ENCODE measurements at regions of chr2 and their contacts with region 1.

Region 1: DNA sequence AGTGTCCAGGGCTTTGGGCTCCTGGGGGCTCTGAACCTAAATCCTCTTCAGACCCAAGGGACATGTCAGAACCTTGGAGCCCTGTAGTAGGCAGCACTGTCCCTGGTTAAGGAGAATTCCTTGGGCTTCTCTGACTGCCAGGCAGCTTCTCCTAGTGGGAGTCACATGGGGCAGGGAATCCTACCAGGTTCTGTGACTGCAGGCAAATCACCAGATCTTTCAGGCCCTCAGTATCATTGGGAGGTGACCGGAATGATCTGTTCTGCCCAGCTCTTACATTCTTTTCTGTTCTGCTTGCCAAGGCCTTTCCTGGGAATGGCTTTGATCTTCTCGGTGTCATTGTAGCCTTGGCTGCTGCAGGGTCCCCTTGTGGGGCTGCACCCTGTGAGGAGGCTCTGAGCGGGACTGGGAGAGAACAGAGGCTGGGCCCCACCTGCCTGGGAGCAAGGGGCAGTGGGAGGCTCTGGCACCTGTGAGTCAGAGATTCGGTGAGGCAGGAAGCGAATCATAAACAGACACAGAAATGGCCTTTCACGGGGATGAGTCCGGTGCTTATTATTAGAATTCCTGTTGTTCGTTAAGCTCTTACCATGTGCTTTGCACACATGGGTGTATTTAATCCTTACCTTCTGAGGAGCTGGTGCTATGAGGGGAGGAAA is 14.1 kb downstream of the CEP68 start:
- DNase-seq: no peak
- H3K4me3 ChIP-seq: no peak overlapping the region
- H3K27ac ChIP-seq: peak overlapping the region; percentile 44 to 69 (median 56)
- H3K4me1 ChIP-seq: peaks cover 0 to 75% (median 63%) of the 10 kb centered on the region in 4 donors
- H3K27me3 ChIP-seq: no peaks in the 10 kb centered on the region
- CTCF ChIP-seq: peak in 2 of 4 experiments; percentile 23 to 33
- EP300 ChIP-seq: no peak
- POLR2A ChIP-seq: no peak

Region 2: DNA sequence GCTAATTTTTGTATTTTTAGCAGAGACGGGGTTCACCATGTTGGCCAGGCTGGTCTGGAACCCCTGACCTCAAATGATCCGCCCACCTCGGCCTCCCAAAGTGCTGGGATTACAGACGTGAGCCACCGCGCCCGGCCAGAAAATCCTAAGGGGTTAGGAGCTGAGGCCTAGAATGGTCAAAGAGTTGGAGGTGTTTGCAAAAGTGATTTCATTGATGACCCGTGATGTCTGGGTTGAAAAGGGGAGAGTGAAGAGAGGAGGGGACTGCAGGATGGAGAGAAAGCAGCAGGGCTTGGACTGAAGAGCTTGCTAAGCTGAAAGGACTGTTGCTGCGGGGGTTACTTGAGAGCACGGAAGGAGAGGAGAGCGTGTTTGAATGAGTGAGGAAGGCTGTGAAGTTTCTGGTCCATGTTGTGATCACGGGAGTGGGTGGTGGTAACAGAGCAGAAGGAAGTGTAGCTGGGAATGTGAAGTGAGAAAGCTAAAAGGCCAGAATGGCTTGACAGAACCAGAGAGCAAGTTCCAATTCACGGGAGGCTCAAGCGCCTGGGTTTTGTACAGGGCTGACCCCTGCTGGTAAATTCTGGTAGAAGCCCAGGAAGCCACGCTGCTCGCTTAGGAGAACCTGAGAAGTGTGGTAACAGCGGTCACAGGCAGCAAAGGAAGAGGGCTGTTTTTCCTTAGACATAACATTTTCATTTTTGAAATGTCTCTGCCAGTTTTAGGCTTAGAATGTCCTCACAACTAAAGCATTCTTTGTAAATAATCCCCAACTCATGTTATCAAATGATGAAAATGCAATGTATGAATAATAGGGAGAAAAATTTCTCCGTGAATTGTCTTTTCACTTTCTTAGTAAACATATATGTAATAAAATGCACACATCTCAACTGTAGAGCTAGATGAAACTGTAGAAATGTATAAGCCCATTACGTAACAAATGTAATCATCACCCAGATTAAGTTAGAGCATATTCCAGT is 116.9 kb after region 1 on chr2:
- intact Hi-C with region 1: loop called (anchors 1 kb)
- DNase-seq: peak; percentile 89
- H3K4me3 ChIP-seq: no peak overlapping the region
- H3K27ac ChIP-seq: no peak overlapping the region
- H3K4me1 ChIP-seq: peaks cover 0 to 7% (median 3%) of the 10 kb centered on the region in 4 donors
- H3K27me3 ChIP-seq: no peaks in the 10 kb centered on the region
- CTCF ChIP-seq: peak; percentile 52 to 84 (median 72)
- EP300 ChIP-seq: no peak
- POLR2A ChIP-seq: no peak

Region 3: GRCh38 chr2:65686927-65687521 is 616.7 kb after region 1 on chr2:
- intact Hi-C with region 1: no loop called
- DNase-seq: no peak
- H3K4me3 ChIP-seq: no peak overlapping the region
- H3K27ac ChIP-seq: no peak overlapping the region
- H3K4me1 ChIP-seq: no peaks in the 10 kb centered on the region
- H3K27me3 ChIP-seq: no peaks in the 10 kb centered on the region
- CTCF ChIP-seq: no peak
- EP300 ChIP-seq: no peak
- POLR2A ChIP-seq: no peak

Measured in sigmoid colon (tissue), 7 donors.